Calu3 (cell line): ENCODE measurements at regions of chr15 and their contacts with region 1.

Region 1: GRCh38 chr15:100713163-100713867 is 110.9 kb downstream of the ASB7 start:
- DNase-seq: peak; percentile 97
- H3K4me3 Mint-ChIP-seq: peak overlapping the region; percentile 45
- H3K27ac Mint-ChIP-seq: peak overlapping the region; percentile 98
- H3K4me1 Mint-ChIP-seq: peaks cover 85% of the 10 kb centered on the region
- H3K27me3 Mint-ChIP-seq: no peaks in the 10 kb centered on the region
- CTCF ChIP-seq: no peak

Region 2: DNA sequence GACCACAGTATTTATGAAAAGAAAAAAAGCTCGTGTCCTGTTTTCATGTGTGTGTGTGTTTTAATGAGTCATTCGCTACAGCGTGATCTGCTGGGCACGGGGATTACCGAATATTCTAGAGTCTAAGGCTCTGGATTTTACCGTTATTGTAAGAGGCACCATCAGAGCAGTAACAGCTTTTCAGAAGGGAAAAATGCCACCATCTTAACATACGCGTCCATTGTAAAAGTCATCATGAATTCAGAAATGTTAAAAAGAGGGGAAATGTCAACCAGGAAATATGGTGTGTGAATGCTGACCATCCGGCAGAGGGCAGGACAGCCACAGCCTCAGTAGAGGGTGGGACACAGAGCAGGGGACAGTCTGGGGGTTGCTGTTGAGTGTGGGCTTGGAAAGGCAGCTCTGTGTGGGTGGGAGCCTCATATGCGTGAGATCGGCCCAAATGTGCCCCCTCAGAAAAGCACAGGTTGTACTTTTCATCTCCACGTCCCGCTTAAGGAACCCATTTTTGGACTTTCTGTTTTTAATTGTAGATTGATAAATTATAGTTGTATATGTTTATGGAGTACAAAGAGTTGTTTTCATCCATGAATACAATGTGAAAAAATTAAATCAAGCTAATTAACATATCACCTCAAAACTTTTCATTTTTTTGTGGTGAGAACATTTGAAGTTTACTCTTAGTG is 41.3 kb before region 1 on chr15:
- CTCF ChIA-PET with region 1: interaction called, 10 read pairs
- intact Hi-C with region 1: loop called (anchors 1 kb)
- DNase-seq: peak; percentile 78
- H3K4me3 Mint-ChIP-seq: peak overlapping the region; percentile 16
- H3K27ac Mint-ChIP-seq: peak overlapping the region; percentile 86
- H3K4me1 Mint-ChIP-seq: peaks cover 32% of the 10 kb centered on the region
- H3K27me3 Mint-ChIP-seq: no peaks in the 10 kb centered on the region
- CTCF ChIP-seq: peak; percentile 81

Region 3: DNA sequence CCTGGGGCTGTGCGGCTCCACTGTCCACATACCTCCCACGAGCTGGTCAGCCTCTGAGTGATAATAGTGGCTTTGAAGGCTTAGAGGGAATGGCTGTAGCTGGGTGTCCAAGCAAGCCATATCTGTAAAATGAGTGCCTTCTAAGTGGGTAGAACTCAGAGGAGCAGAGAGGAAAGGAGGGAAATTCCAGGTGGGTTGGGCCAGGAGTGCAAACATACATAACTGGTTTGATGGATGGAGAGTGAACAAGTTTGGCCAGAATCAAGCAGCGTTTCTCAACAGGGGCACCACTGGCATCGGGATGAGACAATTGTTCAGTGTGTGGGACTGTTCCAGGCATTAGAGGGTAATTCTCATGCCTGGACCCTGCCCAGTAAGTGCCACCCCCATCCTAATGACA is 19.9 kb before region 1 on chr15:
- CTCF ChIA-PET with region 1: interaction called, 3 read pairs
- intact Hi-C with region 1: loop called (anchors 1 kb)
- DNase-seq: peak; percentile 85
- H3K4me3 Mint-ChIP-seq: peak overlapping the region; percentile 24
- H3K27ac Mint-ChIP-seq: peak overlapping the region; percentile 60
- H3K4me1 Mint-ChIP-seq: peaks cover 38% of the 10 kb centered on the region
- H3K27me3 Mint-ChIP-seq: no peaks in the 10 kb centered on the region
- CTCF ChIP-seq: no peak

Region 4: DNA sequence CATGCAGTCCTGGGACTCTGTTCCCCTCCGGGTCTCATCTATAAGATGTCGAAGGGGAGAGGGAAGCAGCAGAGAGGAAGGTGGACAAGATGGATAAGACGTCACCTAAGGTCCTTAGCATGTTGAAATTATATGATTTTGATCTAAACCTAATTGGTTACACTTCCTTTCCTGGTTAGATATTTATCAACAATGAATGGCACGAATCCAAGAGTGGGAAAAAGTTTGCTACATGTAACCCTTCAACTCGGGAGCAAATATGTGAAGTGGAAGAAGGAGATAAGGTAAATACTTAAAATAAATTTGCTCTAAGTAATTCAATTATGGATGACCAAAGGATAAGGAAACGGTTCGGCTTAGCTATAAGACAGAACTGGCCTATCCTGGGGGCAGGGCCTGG is 171.8 kb after region 1 on chr15:
- CTCF ChIA-PET with region 1: no interaction called
- intact Hi-C with region 1: loop called (anchors 2 kb)
- DNase-seq: no peak
- H3K4me3 Mint-ChIP-seq: peak overlapping the region; percentile 79
- H3K27ac Mint-ChIP-seq: peak overlapping the region; percentile 72
- H3K4me1 Mint-ChIP-seq: peaks cover 50% of the 10 kb centered on the region
- H3K27me3 Mint-ChIP-seq: no peaks in the 10 kb centered on the region
- CTCF ChIP-seq: no peak